Head of caudate nucleus (tissue), 42 donors: ENCODE measurements at regions of chr3 and their contacts with region 1.

Region 1: GRCh38 chr3:24680214-24680967 is 185.7 kb upstream of the THRB start:
- DNase-seq: peak; percentile 38 to 87 (median 75)

Region 2: DNA sequence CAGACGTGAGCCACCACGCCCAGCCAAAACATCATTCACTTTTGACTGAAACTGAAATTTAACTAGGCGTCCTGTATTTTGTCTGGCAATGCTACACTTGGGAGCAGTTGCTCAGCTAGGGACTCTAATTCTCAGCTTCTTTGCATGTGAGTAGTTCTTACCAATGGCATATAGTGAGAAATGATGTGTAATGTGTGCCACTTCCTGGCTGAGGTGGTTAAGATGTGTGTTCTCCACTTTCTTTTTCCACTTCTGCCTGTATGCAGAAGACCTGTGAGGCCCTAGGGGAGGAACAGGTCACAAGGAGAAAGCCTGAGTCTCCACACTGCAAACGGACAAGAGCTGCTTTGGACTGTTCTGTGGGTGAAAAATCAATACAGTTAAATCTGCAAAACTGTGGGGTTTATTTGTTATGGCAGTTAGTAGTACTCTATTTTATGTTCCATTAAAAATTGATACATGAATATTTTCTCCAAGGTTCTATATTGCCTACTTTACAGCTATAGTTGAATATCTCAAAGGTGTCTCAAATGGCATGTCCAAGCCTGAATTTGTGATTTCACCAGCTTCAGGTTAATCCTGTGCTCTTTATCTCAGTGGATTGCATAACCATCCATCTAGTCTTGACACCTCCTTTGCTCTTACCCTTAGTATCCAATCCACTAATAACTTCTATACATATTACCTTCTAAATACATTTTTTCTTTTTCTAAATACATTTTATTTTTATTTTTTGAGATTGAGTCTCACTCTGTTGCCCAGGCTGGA is 676.0 kb before region 1 on chr3:
- intact Hi-C with region 1: loop called (anchors 5 kb)
- DNase-seq: no peak

Region 3: GRCh38 chr3:24740326-24740725 is 59.9 kb after region 1 on chr3:
- intact Hi-C with region 1: no loop called
- DNase-seq: no peak

Region 4: DNA sequence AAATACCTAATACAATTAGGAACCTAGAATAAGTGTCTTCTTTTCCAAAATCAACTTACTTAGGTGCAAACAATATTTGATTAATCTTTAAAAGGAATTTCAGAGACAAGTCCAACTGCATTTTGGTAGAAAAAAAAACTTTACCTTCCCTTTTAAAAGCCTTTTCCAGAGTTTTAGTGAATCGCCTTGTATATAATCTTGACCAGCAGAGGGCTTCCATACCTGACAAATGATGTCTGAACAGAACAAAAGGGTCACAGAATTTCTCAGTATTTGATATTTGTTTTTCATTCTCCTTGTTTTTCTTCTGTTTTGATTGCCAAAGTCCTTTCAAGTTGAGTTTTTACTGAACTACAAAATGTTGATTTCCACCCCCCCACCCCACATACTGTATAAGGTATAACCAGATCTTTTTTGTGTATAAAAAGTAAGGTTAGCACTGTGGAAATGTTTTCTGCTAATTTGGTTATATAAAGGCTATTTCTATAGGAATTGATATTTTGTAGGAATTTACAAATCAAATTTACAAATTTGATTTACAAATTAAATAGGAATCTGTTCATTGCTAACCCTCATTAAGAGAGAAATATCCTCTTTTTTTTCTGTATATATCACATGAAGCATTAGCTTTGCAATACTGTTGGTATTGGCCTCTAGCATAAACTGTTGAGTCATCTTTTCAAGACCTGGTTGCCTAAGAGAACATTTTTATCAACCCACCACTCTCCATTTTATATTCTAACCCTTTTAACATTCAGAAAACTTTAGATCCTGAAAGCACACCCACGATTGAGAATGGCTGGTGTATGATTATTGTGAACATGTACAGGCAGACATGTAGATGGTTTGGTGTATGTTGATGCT is 283.6 kb after region 1 on chr3:
- intact Hi-C with region 1: no loop called
- DNase-seq: peak in 2 of 42 donors; percentile 15 to 27